CD4-positive, alpha-beta memory T cell (primary cell): ENCODE measurements at regions of chr19 and their contacts with region 1.

Region 1: GRCh38 chr19:8580710-8581281 is 3.6 kb upstream of the MYO1F start:
- DNase-seq: peak; percentile 79 to 86 (median 83)
- H3K4me3 ChIP-seq: no peak overlapping the region
- H3K4me3 Mint-ChIP-seq: peak overlapping the region in 1 of 8 donors; percentile 21
- H3K27ac ChIP-seq: no peak overlapping the region
- H3K27ac Mint-ChIP-seq: peak overlapping the region in 2 of 7 donors; percentile 61 to 70
- H3K4me1 ChIP-seq: peaks cover 35% of the 10 kb centered on the region
- H3K4me1 Mint-ChIP-seq: peaks cover 17 to 45% (median 29%) of the 10 kb centered on the region in 4 donors
- H3K27me3 ChIP-seq: no peaks in the 10 kb centered on the region
- H3K27me3 Mint-ChIP-seq: no peaks in the 10 kb centered on the region

Region 2: DNA sequence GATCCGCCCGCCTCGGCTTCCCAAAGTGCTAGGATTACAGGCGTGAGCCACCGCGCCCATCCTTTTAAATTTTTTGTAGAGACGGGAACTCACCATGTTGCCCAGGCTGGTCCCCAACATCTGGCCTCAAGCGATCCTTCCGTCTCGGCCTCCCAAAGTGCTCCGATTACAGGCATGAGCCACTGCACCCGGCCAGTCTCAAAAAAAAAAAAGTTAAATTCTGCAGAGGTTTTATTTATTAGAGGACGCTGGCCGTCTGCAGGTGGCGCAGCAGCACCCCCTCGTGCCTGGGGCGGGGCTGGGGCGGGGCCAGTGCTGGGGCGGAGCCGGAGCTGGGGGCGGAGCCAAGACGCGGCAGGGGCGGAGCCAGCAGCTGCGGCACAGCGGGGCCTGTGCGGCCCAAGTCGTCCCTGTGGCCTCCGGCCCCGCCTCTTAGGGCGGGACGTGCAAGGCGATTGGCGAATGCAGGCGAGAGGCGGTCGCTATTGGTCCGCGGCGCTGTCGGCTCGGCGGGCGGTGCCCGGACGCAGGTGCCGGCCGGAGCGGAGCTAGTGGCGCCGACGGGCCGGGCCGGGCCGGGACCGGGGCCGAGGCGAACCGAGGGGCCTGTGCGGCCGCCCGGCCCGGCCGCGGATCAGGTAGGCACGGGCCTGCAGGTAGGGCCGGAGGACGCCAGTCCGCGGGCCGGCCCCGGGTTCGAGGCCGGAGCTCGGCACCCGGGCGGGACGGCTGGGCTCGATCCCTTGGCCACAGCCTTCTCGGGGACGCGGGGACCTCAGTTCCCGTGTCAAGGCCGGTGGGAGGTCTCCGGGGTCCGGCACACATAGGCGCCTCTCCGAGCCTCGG is 167.8 kb before region 1 on chr19 and contains the start of gene MARCHF2:
- CTCF ChIA-PET with region 1: interaction called, 93 read pairs
- POLR2A ChIA-PET with region 1: interaction called, 15 read pairs
- intact Hi-C with region 1: loop called (anchors 1 kb)
- DNase-seq: peak; percentile 93 to 96 (median 95)
- H3K4me3 ChIP-seq: peak within 1 kb of the TSS; percentile 36 to 60
- H3K4me3 Mint-ChIP-seq: peak within 1 kb of the TSS; percentile 54 to 83 (median 78)
- H3K27ac ChIP-seq: peak within 1 kb of the TSS; percentile 55
- H3K27ac Mint-ChIP-seq: peak within 1 kb of the TSS in 5 of 7 donors; percentile 37 to 82 (median 53)
- H3K4me1 ChIP-seq: peaks cover 19% of the 10 kb centered on the region
- H3K4me1 Mint-ChIP-seq: peaks cover 8 to 15% (median 10%) of the 10 kb centered on the region in 4 donors
- H3K27me3 ChIP-seq: no peaks in the 10 kb centered on the region
- H3K27me3 Mint-ChIP-seq: no peaks in the 10 kb centered on the region
- total RNA-seq, gene MARCHF2: 25.5 to 30.3 TPM

Region 3: DNA sequence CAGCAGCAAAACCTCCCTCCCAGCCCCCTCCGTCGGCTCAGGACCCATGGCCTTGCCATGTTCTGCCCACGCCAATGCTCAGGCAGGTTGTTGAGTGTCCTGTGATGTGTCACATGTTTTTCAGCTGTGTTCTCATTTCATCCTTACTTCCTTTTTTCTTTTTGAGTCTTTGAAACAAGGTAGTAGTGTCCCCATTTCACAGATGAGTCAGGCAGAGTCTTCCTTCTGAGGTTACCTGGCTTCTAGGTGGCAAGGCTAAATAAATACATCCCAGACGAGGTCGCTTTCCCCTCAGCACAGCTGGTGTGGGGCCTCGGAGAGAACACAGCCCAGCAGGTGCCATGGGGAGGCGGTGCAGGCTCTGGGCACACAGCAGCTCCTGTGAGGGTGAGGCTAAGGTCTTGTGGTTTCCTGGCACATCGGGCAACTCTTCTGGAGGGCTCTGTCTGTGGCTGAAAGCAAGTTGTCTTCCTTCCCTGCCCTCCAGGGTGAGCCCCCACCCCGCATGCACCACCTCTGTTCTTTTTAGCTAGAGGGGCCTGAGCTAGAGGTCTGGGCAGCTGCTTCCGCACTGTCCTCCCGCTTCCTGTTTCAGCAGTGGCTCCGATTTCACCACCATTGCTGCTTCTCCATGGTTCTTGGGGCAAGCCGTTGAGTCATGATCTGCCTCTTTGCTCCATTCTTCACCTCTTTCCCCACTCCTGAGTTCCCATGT is 93.5 kb before region 1 on chr19:
- CTCF ChIA-PET with region 1: interaction called, 60 read pairs
- POLR2A ChIA-PET with region 1: interaction called, 19 read pairs
- intact Hi-C with region 1: loop called (anchors 1 kb)
- DNase-seq: peak; percentile 66 to 76 (median 71)
- H3K4me3 ChIP-seq: no peak overlapping the region
- H3K4me3 Mint-ChIP-seq: peak overlapping the region; percentile 36 to 79 (median 66)
- H3K27ac ChIP-seq: peak overlapping the region; percentile 41
- H3K27ac Mint-ChIP-seq: peak overlapping the region; percentile 83 to 95 (median 89)
- H3K4me1 ChIP-seq: peaks cover 29% of the 10 kb centered on the region
- H3K4me1 Mint-ChIP-seq: peaks cover 24 to 50% (median 29%) of the 10 kb centered on the region in 4 donors
- H3K27me3 ChIP-seq: no peaks in the 10 kb centered on the region
- H3K27me3 Mint-ChIP-seq: no peaks in the 10 kb centered on the region

Region 4: DNA sequence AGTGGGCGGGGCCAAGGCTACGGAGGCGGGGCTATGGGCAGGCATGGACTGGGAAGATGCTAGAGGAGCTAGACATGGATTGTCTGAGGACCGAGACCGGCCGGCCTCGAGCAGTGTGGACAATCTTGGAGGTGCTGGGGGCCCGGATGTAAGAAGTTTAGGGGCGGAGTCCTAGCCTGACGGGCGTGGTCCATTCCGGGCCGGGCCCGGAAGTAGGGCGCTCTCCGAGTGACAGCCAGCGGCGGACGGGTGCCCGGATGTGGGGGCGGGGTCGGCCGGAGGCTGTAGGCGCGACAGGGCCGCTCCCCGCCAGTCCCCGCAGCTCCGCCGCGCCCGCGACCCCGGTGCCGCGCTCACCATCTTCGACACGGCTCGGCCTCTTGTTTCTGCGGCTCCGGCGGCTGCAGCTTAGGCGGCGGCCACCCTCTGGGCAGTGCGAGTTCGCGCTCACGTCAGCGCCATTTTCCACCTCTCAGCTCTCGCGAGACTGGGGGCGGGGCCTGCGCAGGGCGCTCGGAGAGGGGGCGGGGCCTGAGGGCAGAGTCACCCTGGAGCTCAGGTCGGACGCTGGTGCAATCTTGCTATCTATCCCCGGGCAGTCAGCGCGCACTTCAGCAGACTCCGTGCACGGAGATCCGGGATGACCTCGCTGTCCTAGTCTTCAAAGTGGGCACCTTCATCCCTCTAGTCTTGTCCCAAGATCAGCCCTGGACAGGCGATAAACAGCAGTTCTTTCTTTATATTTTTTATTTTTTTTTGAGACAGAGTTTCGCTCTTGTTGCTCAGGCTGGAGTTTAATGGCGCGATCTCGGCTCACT is 66.9 kb before region 1 on chr19 and contains the start of gene ZNF414:
- CTCF ChIA-PET with region 1: interaction called, 144 read pairs
- POLR2A ChIA-PET with region 1: interaction called, 461 read pairs
- intact Hi-C with region 1: loop called (anchors 2 kb)
- DNase-seq: peak; percentile 94 to 99 (median 97)
- H3K4me3 ChIP-seq: peak within 1 kb of the TSS; percentile 34 to 82
- H3K4me3 Mint-ChIP-seq: peak within 1 kb of the TSS; percentile 87 to 97 (median 94)
- H3K27ac ChIP-seq: peak within 1 kb of the TSS; percentile 93
- H3K27ac Mint-ChIP-seq: peak within 1 kb of the TSS; percentile 96 to 99 (median 99)
- H3K4me1 ChIP-seq: peaks cover 68% of the 10 kb centered on the region
- H3K4me1 Mint-ChIP-seq: peaks cover 30 to 67% (median 50%) of the 10 kb centered on the region in 4 donors
- H3K27me3 ChIP-seq: no peaks in the 10 kb centered on the region
- H3K27me3 Mint-ChIP-seq: no peaks in the 10 kb centered on the region
- total RNA-seq, gene ZNF414: 45.1 to 50.4 TPM

Region 5: DNA sequence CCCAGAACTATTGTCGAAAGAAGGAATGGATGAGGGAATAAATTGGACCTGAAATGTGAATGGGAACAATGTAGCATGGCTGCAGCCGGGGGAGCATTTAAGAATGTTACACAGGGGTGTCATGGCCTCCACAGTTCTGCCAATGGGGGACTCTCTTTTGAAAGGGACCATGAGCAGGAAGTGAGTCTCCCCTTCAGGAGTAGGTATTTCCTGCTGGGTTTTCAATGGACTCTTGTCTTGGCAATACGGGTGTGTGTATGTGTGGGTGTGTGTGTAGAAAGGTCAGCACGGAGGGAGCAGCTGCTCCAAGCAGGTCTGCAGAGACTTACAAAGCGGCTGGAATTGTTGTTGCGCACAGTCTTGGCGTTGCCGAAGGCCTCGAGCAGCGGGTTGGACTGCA is 28.0 kb before region 1 on chr19:
- CTCF ChIA-PET with region 1: interaction called, 111 read pairs
- POLR2A ChIA-PET with region 1: interaction called, 25 read pairs
- intact Hi-C with region 1: no loop called
- DNase-seq: no peak
- H3K4me3 ChIP-seq: no peak overlapping the region
- H3K4me3 Mint-ChIP-seq: no peak overlapping the region
- H3K27ac ChIP-seq: no peak overlapping the region
- H3K27ac Mint-ChIP-seq: peak overlapping the region in 6 of 7 donors; percentile 0 to 81 (median 44)
- H3K4me1 ChIP-seq: peaks cover 7% of the 10 kb centered on the region
- H3K4me1 Mint-ChIP-seq: peaks cover 6 to 20% (median 11%) of the 10 kb centered on the region in 4 donors
- H3K27me3 ChIP-seq: no peaks in the 10 kb centered on the region
- H3K27me3 Mint-ChIP-seq: no peaks in the 10 kb centered on the region

Region 6: DNA sequence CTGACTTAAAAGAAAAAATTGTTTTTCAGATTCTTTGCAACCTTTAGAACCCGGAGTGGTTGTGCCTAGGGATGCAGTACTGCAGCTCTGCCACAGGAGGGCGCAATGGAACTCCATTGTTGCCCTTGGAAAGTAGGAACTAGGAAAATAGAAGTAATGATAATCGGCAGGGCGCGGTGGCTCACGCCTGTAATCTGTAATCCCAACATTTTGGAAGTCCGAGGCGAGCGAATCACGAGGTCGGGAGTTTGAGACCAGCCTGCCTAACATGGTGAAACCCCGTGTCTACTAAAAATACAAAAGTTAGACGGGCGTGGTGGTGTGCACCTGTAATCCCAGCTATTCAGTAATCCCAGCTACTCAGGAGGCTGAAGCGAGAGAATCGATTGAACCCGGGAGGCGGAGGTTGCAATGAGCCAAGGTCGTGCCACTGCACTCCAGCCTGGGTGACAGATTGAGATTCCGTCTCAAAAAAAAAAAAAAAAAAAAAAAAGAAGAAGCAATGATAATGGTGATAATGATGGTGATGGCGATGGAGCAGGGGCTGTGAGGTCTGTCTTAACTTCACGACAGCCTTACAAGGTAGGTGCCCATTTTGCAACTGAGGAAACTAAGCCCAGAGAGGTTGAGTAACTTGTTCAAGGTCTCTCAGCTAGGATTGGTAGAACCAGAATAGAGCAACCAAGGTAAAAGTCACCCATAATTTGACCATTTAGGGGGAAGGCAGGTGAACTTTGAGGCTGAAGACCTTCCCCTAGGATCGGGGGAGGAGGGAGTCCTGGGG is 35.2 kb after region 1 on chr19:
- CTCF ChIA-PET with region 1: interaction called, 19 read pairs
- POLR2A ChIA-PET with region 1: interaction called, 3 read pairs
- intact Hi-C with region 1: loop called (anchors 1 kb)
- DNase-seq: peak; percentile 51 to 63 (median 56)
- H3K4me3 ChIP-seq: no peak overlapping the region
- H3K4me3 Mint-ChIP-seq: peak overlapping the region in 4 of 8 donors; percentile 22 to 64 (median 44)
- H3K27ac ChIP-seq: no peak overlapping the region
- H3K27ac Mint-ChIP-seq: peak overlapping the region in 6 of 7 donors; percentile 11 to 57 (median 46)
- H3K4me1 ChIP-seq: peaks cover 20% of the 10 kb centered on the region
- H3K4me1 Mint-ChIP-seq: peaks cover 9 to 27% (median 17%) of the 10 kb centered on the region in 4 donors
- H3K27me3 ChIP-seq: no peaks in the 10 kb centered on the region
- H3K27me3 Mint-ChIP-seq: peaks cover 3 to 8% of the 10 kb centered on the region in 2 donors